ENCODE measurements at regions of chr2 and their contacts with region 1.

Region 1: GRCh38 chr2:53813151-53813550 is 26.3 kb downstream of the ERLEC1 start:
- DNase-seq: no peak
- ATAC-seq: no peak
- H3K4me3 ChIP-seq: no peak overlapping the region
- H3K27ac ChIP-seq: no peak overlapping the region
- H3K4me1 ChIP-seq: no peaks in the 10 kb centered on the region
- H3K27me3 ChIP-seq: no peaks in the 10 kb centered on the region
- CTCF ChIP-seq: no peak
- POLR2A ChIP-seq: no peak
- RAD21 ChIP-seq: no peak

Region 2: DNA sequence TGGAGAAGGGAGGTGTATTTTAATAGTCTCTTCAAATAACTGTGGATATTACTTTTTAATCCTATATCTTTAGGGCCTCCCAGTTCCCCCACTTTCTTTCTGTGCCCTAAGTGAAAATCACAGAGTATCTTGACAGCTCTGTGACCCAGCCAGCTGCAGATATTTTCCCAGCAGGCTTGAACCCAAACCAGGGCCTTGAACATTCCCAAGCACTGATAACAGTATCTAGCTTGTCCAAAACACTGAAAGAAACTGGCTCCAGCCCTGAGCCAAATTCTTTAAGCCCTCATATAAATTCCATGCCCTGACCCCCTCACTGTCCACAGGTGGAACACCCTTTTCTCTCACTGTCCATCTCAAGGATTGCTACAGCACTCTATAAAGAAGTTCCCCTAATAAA is 433.6 kb before region 1 on chr2:
- CTCF ChIA-PET with region 1: no interaction called
- POLR2A ChIA-PET with region 1: no interaction called
- dilution Hi-C with region 1: no loop called
- in situ Hi-C with region 1: no loop called
- intact Hi-C with region 1: no loop called
- DNase-seq: no peak
- ATAC-seq: no peak
- H3K4me3 ChIP-seq: no peak overlapping the region
- H3K27ac ChIP-seq: no peak overlapping the region
- H3K4me1 ChIP-seq: no peaks in the 10 kb centered on the region
- H3K27me3 ChIP-seq: no peaks in the 10 kb centered on the region
- CTCF ChIP-seq: no peak
- POLR2A ChIP-seq: no peak
- RAD21 ChIP-seq: no peak

Region 3: GRCh38 chr2:54479422-54479821 is 666.3 kb after region 1 on chr2:
- CTCF ChIA-PET with region 1: interaction called, 11 read pairs
- POLR2A ChIA-PET with region 1: no interaction called
- dilution Hi-C with region 1: no loop called
- in situ Hi-C with region 1: no loop called
- intact Hi-C with region 1: no loop called
- DNase-seq: no peak
- ATAC-seq: no peak
- H3K4me3 ChIP-seq: no peak overlapping the region
- H3K27ac ChIP-seq: no peak overlapping the region
- H3K4me1 ChIP-seq: peaks cover 20% of the 10 kb centered on the region
- H3K27me3 ChIP-seq: no peaks in the 10 kb centered on the region
- CTCF ChIP-seq: no peak
- POLR2A ChIP-seq: no peak
- RAD21 ChIP-seq: no peak